ENCODE measurements at regions of chr2 and their contacts with region 1.

Region 1: DNA sequence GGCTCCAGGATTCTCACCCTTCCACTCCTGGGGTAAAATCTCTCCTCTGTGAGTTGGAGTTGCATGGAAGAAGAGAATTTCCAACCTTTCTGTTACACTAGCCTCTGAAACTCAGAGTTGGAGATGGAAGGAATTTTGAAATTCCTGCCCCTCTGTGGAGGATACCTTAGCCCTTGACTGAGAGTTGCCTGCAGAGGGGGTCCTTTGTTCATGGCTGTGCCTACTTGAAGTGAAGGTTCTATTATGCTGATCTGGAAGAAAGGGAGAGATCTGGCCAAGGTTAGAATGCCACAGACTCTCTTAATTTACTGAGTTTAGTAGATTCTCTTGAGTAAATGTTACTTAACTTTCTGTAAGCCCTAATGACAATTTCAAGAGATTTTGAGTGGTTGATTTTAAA is 626.6 kb upstream of the GYPC start:
- DNase-seq: no peak
- ATAC-seq: no peak
- H3K4me3 ChIP-seq: no peak overlapping the region
- H3K4me3 Mint-ChIP-seq: no peak overlapping the region
- H3K27ac ChIP-seq: no peak overlapping the region
- H3K27ac Mint-ChIP-seq: no peak overlapping the region
- H3K4me1 ChIP-seq: no peaks in the 10 kb centered on the region
- H3K4me1 Mint-ChIP-seq: no peaks in the 10 kb centered on the region
- H3K27me3 ChIP-seq: no peaks in the 10 kb centered on the region
- H3K27me3 Mint-ChIP-seq: no peaks in the 10 kb centered on the region

Region 2: DNA sequence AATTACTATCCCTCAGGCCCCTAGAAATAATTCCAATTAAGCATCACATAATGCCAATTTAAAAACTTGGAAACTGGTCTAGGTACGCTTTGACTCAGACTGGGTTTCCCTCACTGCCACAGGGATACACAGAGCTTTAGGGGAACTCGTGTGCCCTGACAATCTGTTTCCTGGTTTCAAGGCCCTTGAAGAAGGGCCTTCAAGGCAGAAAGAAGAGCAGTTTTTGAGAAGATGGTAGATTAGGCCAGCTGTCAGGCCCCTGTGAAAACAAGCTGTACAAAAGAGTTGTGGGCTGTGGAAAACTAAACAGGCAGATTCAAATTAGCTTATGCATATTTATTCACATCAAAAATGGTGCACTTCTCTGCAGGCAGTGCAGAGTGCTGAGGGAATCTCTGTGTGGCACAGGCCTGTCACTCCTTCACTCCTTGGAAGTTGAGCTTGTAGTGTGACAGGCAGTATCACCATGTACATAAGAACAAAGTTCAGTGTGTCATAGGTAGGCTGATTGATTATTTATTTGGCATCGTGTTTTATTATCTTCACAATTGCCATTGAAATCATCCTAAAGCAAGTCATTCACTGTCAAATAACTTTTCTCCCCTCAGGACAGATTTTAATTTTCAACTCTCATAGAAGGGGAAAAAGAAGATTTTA is 12.2 kb after region 1 on chr2:
- CTCF ChIA-PET with region 1: no interaction called
- POLR2A ChIA-PET with region 1: no interaction called
- DNase-seq: no peak
- ATAC-seq: no peak
- H3K4me3 ChIP-seq: no peak overlapping the region
- H3K4me3 Mint-ChIP-seq: no peak overlapping the region
- H3K27ac ChIP-seq: no peak overlapping the region
- H3K27ac Mint-ChIP-seq: no peak overlapping the region
- H3K4me1 ChIP-seq: no peaks in the 10 kb centered on the region
- H3K4me1 Mint-ChIP-seq: no peaks in the 10 kb centered on the region
- H3K27me3 ChIP-seq: no peaks in the 10 kb centered on the region
- H3K27me3 Mint-ChIP-seq: no peaks in the 10 kb centered on the region

Region 3: DNA sequence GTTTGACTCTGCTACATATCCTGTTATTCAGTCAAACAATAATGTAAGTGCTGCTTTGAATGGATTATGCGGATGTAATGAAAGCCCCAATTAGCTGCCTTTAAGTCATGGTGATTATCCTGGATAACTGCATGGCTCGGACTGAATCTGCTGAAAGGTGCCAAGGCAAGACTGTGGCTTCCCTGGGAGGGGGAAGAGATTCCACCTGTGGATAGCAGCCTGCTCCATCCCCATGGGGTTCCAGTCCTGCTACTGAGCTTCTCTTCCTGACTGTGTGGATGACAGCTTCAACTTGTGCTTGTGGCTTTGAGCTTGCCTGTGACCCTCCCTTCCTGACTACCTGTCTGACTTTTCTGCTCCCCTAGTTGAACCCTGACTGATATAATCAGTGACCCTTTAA is 86.7 kb after region 1 on chr2:
- CTCF ChIA-PET with region 1: no interaction called
- POLR2A ChIA-PET with region 1: interaction called in 1 of 2 experiments, 10 read pairs
- DNase-seq: no peak
- ATAC-seq: no peak
- H3K4me3 ChIP-seq: no peak overlapping the region
- H3K4me3 Mint-ChIP-seq: no peak overlapping the region
- H3K27ac ChIP-seq: no peak overlapping the region
- H3K27ac Mint-ChIP-seq: no peak overlapping the region
- H3K4me1 ChIP-seq: no peaks in the 10 kb centered on the region
- H3K4me1 Mint-ChIP-seq: no peaks in the 10 kb centered on the region
- H3K27me3 ChIP-seq: no peaks in the 10 kb centered on the region
- H3K27me3 Mint-ChIP-seq: no peaks in the 10 kb centered on the region

Region 4: DNA sequence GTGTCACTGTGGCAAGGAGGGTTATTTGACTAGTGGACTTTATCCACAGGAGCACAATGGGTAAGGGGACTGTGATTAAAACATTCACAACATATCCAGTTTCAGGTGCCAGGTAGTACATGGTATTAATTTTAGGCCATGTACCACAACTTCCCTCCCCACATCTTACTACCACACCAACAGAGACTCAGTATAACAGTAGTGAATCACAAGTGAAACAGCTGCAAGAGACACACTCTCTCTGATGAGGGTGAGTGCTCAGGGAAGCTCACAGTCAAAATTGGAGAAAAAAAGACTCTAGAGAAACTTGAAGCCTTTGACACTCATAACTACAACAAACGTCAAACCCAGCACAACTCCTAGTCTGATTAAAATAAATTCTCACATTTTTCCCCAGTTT is 259.0 kb after region 1 on chr2:
- CTCF ChIA-PET with region 1: no interaction called
- POLR2A ChIA-PET with region 1: no interaction called
- DNase-seq: no peak
- ATAC-seq: no peak
- H3K4me3 ChIP-seq: no peak overlapping the region
- H3K4me3 Mint-ChIP-seq: no peak overlapping the region
- H3K27ac ChIP-seq: no peak overlapping the region
- H3K27ac Mint-ChIP-seq: no peak overlapping the region
- H3K4me1 ChIP-seq: no peaks in the 10 kb centered on the region
- H3K4me1 Mint-ChIP-seq: no peaks in the 10 kb centered on the region
- H3K27me3 ChIP-seq: no peaks in the 10 kb centered on the region
- H3K27me3 Mint-ChIP-seq: peaks cover 7 to 14% of the 10 kb centered on the region in 2 donors